WTC11 (cell line): ENCODE measurements at regions of chr1 and their contacts with region 1.

Region 1: GRCh38 chr1:29703596-29704370 is 467.5 kb downstream of the PTPRU start:
- DNase-seq: peak; percentile 43
- ATAC-seq: peak; percentile 37
- H3K4me3 Mint-ChIP-seq: no peak overlapping the region
- H3K27ac Mint-ChIP-seq: no peak overlapping the region
- H3K4me1 Mint-ChIP-seq: peaks cover 23% of the 10 kb centered on the region
- H3K27me3 Mint-ChIP-seq: peaks cover 17% of the 10 kb centered on the region
- CTCF ChIP-seq: peak; percentile 41; the same call in 1 of the 2 replicates

Region 2: GRCh38 chr1:29590583-29591565 is 112.9 kb before region 1 on chr1:
- CTCF ChIA-PET with region 1: no interaction called
- POLR2A ChIA-PET with region 1: no interaction called
- DNase-seq: no peak
- ATAC-seq: no peak
- H3K4me3 Mint-ChIP-seq: no peak overlapping the region
- H3K27ac Mint-ChIP-seq: no peak overlapping the region
- H3K4me1 Mint-ChIP-seq: peaks cover 4% of the 10 kb centered on the region; the same call in 1 of the 2 replicates
- H3K27me3 Mint-ChIP-seq: no peaks in the 10 kb centered on the region
- CTCF ChIP-seq: no peak

Region 3: GRCh38 chr1:29639741-29640427 is 63.9 kb before region 1 on chr1:
- CTCF ChIA-PET with region 1: interaction called, 10 read pairs
- POLR2A ChIA-PET with region 1: no interaction called
- DNase-seq: no peak
- ATAC-seq: no peak
- H3K4me3 Mint-ChIP-seq: no peak overlapping the region
- H3K27ac Mint-ChIP-seq: no peak overlapping the region
- H3K4me1 Mint-ChIP-seq: peaks cover 3% of the 10 kb centered on the region
- H3K27me3 Mint-ChIP-seq: no peaks in the 10 kb centered on the region
- CTCF ChIP-seq: no peak

Region 4: GRCh38 chr1:29688471-29689365 is 15.1 kb before region 1 on chr1:
- CTCF ChIA-PET with region 1: interaction called, 35 read pairs
- POLR2A ChIA-PET with region 1: no interaction called
- DNase-seq: no peak
- ATAC-seq: no peak
- H3K4me3 Mint-ChIP-seq: no peak overlapping the region
- H3K27ac Mint-ChIP-seq: no peak overlapping the region
- H3K4me1 Mint-ChIP-seq: peaks cover 5% of the 10 kb centered on the region; the same call in 1 of the 2 replicates
- H3K27me3 Mint-ChIP-seq: no peaks in the 10 kb centered on the region
- CTCF ChIP-seq: no peak